CD8-positive, alpha-beta memory T cell (primary cell): ENCODE measurements at regions of chr3 and their contacts with region 1.

Region 1: GRCh38 chr3:129316131-129317013 is 37.7 kb downstream of the HMCES start:
- DNase-seq: peak; percentile 74 to 91 (median 78)
- H3K4me3 ChIP-seq: peak overlapping the region; percentile 84
- H3K4me3 Mint-ChIP-seq: peak overlapping the region; percentile 86 to 98 (median 91)
- H3K27ac ChIP-seq: peak overlapping the region; percentile 75
- H3K27ac Mint-ChIP-seq: peak overlapping the region in 7 of 8 donors; percentile 34 to 81 (median 75)
- H3K4me1 ChIP-seq: peaks cover 23% of the 10 kb centered on the region
- H3K4me1 Mint-ChIP-seq: peaks cover 21 to 34% (median 29%) of the 10 kb centered on the region in 3 donors
- H3K27me3 ChIP-seq: no peaks in the 10 kb centered on the region
- H3K27me3 Mint-ChIP-seq: peaks cover 0 to 3% of the 10 kb centered on the region in 2 donors

Region 2: GRCh38 chr3:129249276-129250065 is 66.9 kb before region 1 on chr3 and contains the start of gene COPG1:
- CTCF ChIA-PET with region 1: interaction called, 7 read pairs
- POLR2A ChIA-PET with region 1: interaction called, 11 read pairs
- DNase-seq: peak; percentile 77 to 91 (median 88)
- H3K4me3 ChIP-seq: peak within 1 kb of the TSS; percentile 100
- H3K4me3 Mint-ChIP-seq: peak within 1 kb of the TSS; percentile 96 to 100 (median 97)
- H3K27ac ChIP-seq: peak within 1 kb of the TSS; percentile 97
- H3K27ac Mint-ChIP-seq: peak within 1 kb of the TSS; percentile 95 to 100 (median 98)
- H3K4me1 ChIP-seq: peaks cover 25% of the 10 kb centered on the region
- H3K4me1 Mint-ChIP-seq: peaks cover 37 to 55% (median 42%) of the 10 kb centered on the region in 3 donors
- H3K27me3 ChIP-seq: no peaks in the 10 kb centered on the region
- H3K27me3 Mint-ChIP-seq: peaks cover 0 to 2% of the 10 kb centered on the region in 2 donors
- total RNA-seq, gene COPG1: 134 to 136 TPM

Region 3: GRCh38 chr3:129278439-129278970 is 37.9 kb before region 1 on chr3 and contains the start of gene HMCES:
- CTCF ChIA-PET with region 1: interaction called, 10 read pairs
- POLR2A ChIA-PET with region 1: interaction called, 55 read pairs
- DNase-seq: peak; percentile 91 to 95 (median 94)
- H3K4me3 ChIP-seq: peak within 1 kb of the TSS; percentile 96
- H3K4me3 Mint-ChIP-seq: peak within 1 kb of the TSS; percentile 94 to 99 (median 98)
- H3K27ac ChIP-seq: peak within 1 kb of the TSS; percentile 94
- H3K27ac Mint-ChIP-seq: peak within 1 kb of the TSS; percentile 96 to 99 (median 98)
- H3K4me1 ChIP-seq: peaks cover 26% of the 10 kb centered on the region
- H3K4me1 Mint-ChIP-seq: peaks cover 32 to 50% (median 38%) of the 10 kb centered on the region in 3 donors
- H3K27me3 ChIP-seq: no peaks in the 10 kb centered on the region
- H3K27me3 Mint-ChIP-seq: peaks cover 0 to 3% of the 10 kb centered on the region in 2 donors
- total RNA-seq, gene HMCES: 64.3 to 64.6 TPM

Region 4: GRCh38 chr3:129289201-129289921 is 27.0 kb before region 1 on chr3:
- CTCF ChIA-PET with region 1: interaction called, 10 read pairs
- POLR2A ChIA-PET with region 1: interaction called, 6 read pairs
- DNase-seq: no peak
- H3K4me3 ChIP-seq: no peak overlapping the region
- H3K4me3 Mint-ChIP-seq: no peak overlapping the region
- H3K27ac ChIP-seq: no peak overlapping the region
- H3K27ac Mint-ChIP-seq: peak overlapping the region in 2 of 8 donors; percentile 38 to 47
- H3K4me1 ChIP-seq: no peaks in the 10 kb centered on the region
- H3K4me1 Mint-ChIP-seq: peaks cover 16 to 33% (median 25%) of the 10 kb centered on the region in 3 donors
- H3K27me3 ChIP-seq: no peaks in the 10 kb centered on the region
- H3K27me3 Mint-ChIP-seq: no peaks in the 10 kb centered on the region

Region 5: GRCh38 chr3:129305592-129306091 is 10.7 kb before region 1 on chr3:
- CTCF ChIA-PET with region 1: interaction called, 11 read pairs
- POLR2A ChIA-PET with region 1: interaction called, 3 read pairs
- DNase-seq: no peak
- H3K4me3 ChIP-seq: no peak overlapping the region
- H3K4me3 Mint-ChIP-seq: no peak overlapping the region
- H3K27ac ChIP-seq: no peak overlapping the region
- H3K27ac Mint-ChIP-seq: peak overlapping the region in 2 of 8 donors; percentile 54 to 70
- H3K4me1 ChIP-seq: no peaks in the 10 kb centered on the region
- H3K4me1 Mint-ChIP-seq: peaks cover 3 to 15% (median 12%) of the 10 kb centered on the region in 3 donors
- H3K27me3 ChIP-seq: no peaks in the 10 kb centered on the region
- H3K27me3 Mint-ChIP-seq: no peaks in the 10 kb centered on the region

Region 6: GRCh38 chr3:129393271-129393670 is 76.9 kb after region 1 on chr3:
- CTCF ChIA-PET with region 1: no interaction called
- POLR2A ChIA-PET with region 1: no interaction called
- DNase-seq: no peak
- H3K4me3 ChIP-seq: no peak overlapping the region
- H3K4me3 Mint-ChIP-seq: no peak overlapping the region
- H3K27ac ChIP-seq: no peak overlapping the region
- H3K27ac Mint-ChIP-seq: peak overlapping the region in 1 of 8 donors; percentile 36
- H3K4me1 ChIP-seq: peaks cover 9% of the 10 kb centered on the region
- H3K4me1 Mint-ChIP-seq: peaks cover 24 to 37% (median 34%) of the 10 kb centered on the region in 3 donors
- H3K27me3 ChIP-seq: no peaks in the 10 kb centered on the region
- H3K27me3 Mint-ChIP-seq: no peaks in the 10 kb centered on the region

Region 7: GRCh38 chr3:129418041-129418973 is 101.9 kb after region 1 on chr3:
- CTCF ChIA-PET with region 1: no interaction called
- POLR2A ChIA-PET with region 1: no interaction called
- DNase-seq: no peak
- H3K4me3 ChIP-seq: no peak overlapping the region
- H3K4me3 Mint-ChIP-seq: no peak overlapping the region
- H3K27ac ChIP-seq: no peak overlapping the region
- H3K27ac Mint-ChIP-seq: no peak overlapping the region
- H3K4me1 ChIP-seq: no peaks in the 10 kb centered on the region
- H3K4me1 Mint-ChIP-seq: no peaks in the 10 kb centered on the region
- H3K27me3 ChIP-seq: no peaks in the 10 kb centered on the region
- H3K27me3 Mint-ChIP-seq: no peaks in the 10 kb centered on the region